ENCODE measurements at regions of chr17 and their contacts with region 1.

Region 1: GRCh38 chr17:28728364-28729088 is at the start of gene NEK8:
- DNase-seq: peak; percentile 97
- ATAC-seq: peak; percentile 77
- total RNA-seq, gene NEK8: 0.94 TPM

Region 2: GRCh38 chr17:28750178-28751047 is 21.9 kb after region 1 on chr17:
- intact Hi-C with region 1: loop called (anchors 2 kb)
- DNase-seq: peak; percentile 95
- ATAC-seq: peak; percentile 86

Measured in left ventricle myocardium superior (tissue), 1 donor.